ENCODE measurements at regions of chr11 and their contacts with region 1.

Region 1: DNA sequence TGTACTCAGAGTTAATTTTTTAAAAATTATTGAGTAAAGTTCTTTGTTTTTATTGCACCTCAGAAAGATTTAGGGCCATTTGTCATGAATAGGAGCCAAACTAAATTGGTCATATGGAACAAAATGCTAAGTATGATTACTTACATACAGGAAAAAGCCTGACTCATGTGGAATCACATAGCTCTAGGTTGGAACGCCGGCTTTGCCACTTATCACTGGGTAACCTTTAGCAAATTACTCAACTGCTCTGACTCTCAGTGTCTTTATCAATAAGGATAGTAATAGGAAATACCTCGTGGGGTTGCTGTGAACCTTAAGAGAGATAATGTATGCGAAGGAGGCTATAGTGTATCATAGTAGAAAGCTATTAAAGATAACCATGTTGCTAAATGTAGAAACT is 638.5 kb downstream of the NELL1 start:
- DNase-seq: no peak
- H3K4me3 ChIP-seq: no peak overlapping the region
- H3K27ac ChIP-seq: no peak overlapping the region
- H3K4me1 ChIP-seq: no peaks in the 10 kb centered on the region
- H3K27me3 ChIP-seq: no peaks in the 10 kb centered on the region
- CTCF ChIP-seq: no peak
- POLR2A ChIP-seq: no peak

Region 2: GRCh38 chr11:20881328-20882079 is 426.4 kb before region 1 on chr11:
- CTCF ChIA-PET with region 1: no interaction called
- POLR2A ChIA-PET with region 1: no interaction called
- dilution Hi-C with region 1: no loop called
- intact Hi-C with region 1: no loop called
- DNase-seq: no peak
- H3K4me3 ChIP-seq: no peak overlapping the region
- H3K27ac ChIP-seq: no peak overlapping the region
- H3K4me1 ChIP-seq: no peaks in the 10 kb centered on the region
- H3K27me3 ChIP-seq: no peaks in the 10 kb centered on the region
- CTCF ChIP-seq: no peak
- POLR2A ChIP-seq: no peak

Region 3: DNA sequence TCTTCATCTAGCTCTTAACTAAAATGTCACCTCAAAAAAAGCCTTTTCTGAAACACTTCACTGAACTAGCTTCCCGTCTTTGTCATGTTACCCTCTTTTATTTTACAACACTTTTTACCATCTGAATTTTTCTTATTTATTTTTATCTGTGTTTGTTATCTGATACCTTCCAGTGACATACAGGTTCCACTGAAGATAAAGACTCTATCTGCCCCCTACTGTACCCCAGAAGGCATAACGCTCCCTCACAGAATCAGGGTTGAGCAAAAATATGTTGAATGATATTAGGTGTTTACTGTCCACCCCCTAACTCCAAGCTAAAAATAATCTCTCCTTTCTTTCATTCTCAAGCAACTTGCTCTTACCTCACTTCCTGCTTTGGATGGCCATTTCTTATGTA is 15.7 kb after region 1 on chr11:
- CTCF ChIA-PET with region 1: no interaction called
- POLR2A ChIA-PET with region 1: no interaction called
- dilution Hi-C with region 1: no loop called
- intact Hi-C with region 1: loop called (anchors 1 kb)
- DNase-seq: no peak
- H3K4me3 ChIP-seq: no peak overlapping the region
- H3K27ac ChIP-seq: no peak overlapping the region
- H3K4me1 ChIP-seq: no peaks in the 10 kb centered on the region
- H3K27me3 ChIP-seq: no peaks in the 10 kb centered on the region
- CTCF ChIP-seq: no peak
- POLR2A ChIP-seq: no peak

Measured in endothelial cell of umbilical vein (primary cell).